ENCODE measurements at regions of chr12 and their contacts with region 1.

Region 1: DNA sequence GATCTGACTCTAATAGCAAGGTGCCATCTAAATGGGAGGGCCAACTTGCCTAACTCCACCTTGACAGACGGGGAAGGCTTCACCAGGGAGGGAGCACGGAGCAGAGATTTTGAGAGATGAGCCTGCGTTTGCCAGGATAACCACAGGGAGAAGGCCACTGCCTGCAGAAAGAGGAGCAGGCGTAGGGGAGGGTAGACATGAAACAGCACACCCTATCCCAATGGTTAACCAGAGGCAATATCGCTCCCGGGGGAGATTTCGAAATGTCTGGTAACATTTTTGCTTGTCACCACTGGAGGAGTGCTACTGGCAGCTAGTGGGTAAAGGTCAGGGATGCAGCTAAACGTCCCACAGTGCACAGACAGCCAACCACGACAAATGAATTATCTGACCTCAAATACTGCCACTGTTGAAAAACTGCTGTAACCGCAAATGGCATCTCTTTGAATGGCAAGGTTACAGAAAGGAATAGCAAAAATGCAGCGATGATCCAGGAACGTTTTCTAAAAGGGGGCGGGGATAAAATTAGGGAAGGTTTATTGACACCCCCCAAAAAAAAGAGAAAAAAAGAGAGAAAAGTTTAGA is 126.0 kb upstream of the ATF7IP start:
- DNase-seq: peak in 1 of 2 donors; percentile 32
- H3K4me3 ChIP-seq: peak overlapping the region; percentile 5 to 27
- H3K27ac ChIP-seq: peak overlapping the region in 1 of 2 donors; percentile 26
- H3K4me1 ChIP-seq: peaks cover 0 to 14% (median 4%) of the 10 kb centered on the region in 4 donors
- H3K27me3 ChIP-seq: no peaks in the 10 kb centered on the region
- CTCF ChIP-seq: no peak

Region 2: DNA sequence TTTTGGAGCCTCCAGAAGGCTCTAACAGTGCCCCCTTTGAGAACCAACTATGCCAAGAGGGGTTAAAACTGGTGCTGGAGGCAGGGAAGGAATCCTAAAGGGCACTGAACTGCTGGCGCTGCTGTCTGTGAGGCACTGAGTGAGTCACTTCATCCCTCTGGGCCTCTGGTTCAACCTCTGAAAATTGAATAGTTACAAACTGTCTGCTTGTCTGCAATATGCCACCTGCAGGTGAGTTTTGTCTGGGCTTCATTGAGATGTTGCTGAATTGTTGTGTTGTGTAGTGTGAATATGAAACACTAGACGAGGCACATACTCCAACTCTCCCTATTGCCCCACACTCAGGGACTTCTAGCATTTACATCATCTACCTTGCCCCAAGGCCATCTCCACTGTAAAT is 326.1 kb before region 1 on chr12:
- intact Hi-C with region 1: no loop called
- DNase-seq: no peak
- H3K4me3 ChIP-seq: no peak overlapping the region
- H3K27ac ChIP-seq: no peak overlapping the region
- H3K4me1 ChIP-seq: no peaks in the 10 kb centered on the region
- H3K27me3 ChIP-seq: no peaks in the 10 kb centered on the region
- CTCF ChIP-seq: no peak

Region 3: DNA sequence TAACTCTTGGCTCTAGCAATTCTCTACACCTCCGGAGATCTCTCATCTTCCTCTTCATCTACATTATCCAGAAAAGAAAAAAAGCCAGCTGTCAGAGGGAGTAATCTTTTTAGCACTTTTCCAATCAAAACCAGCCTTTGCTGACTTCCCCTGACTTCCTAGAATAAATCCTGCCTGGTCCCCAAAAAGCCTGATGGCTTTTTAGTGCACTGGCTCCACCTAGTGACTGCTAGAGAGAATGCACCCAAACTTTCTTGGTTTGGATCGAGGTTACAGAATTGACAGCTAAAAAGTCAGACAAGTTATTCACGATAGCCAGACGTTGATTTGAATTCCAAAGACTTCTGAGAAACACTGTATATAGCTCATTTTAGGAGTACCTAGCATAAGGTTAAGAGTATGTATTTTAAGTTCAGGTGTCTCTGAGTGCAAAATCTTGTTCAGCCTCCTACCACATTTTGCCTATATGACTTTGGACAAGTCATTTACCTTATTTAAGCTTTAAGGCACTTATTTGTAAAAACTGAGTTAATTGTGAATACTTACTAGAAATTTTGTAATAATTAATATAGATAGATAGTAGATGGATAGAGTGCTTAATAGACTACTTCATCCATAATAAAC is 72.3 kb before region 1 on chr12:
- intact Hi-C with region 1: no loop called
- DNase-seq: peak in 1 of 2 donors; percentile 29
- H3K4me3 ChIP-seq: no peak overlapping the region
- H3K27ac ChIP-seq: no peak overlapping the region
- H3K4me1 ChIP-seq: no peaks in the 10 kb centered on the region
- H3K27me3 ChIP-seq: no peaks in the 10 kb centered on the region
- CTCF ChIP-seq: peak; percentile 71 to 85

Region 4: GRCh38 chr12:14185427-14186192 is 53.8 kb before region 1 on chr12:
- intact Hi-C with region 1: no loop called
- DNase-seq: no peak
- H3K4me3 ChIP-seq: no peak overlapping the region
- H3K27ac ChIP-seq: no peak overlapping the region
- H3K4me1 ChIP-seq: no peaks in the 10 kb centered on the region
- H3K27me3 ChIP-seq: no peaks in the 10 kb centered on the region
- CTCF ChIP-seq: peak; percentile 15 to 34

Region 5: DNA sequence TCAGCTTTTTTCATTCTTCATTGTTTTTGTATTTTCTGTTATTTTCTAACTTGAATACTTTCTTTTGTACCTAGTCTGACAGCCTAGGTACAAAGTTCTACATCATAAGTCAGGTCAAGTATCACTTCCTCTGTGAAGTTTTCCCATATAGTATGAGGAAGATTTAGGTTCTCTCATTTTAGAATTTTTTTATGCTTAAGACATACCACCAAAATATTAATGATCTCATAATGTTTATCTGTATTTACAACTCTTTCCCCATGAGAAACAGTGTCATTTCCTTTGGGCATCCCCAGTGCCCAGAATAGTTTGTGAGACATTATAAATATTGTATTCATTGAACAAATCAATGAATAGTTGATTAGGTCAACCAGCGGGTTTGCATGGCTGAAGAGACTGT is 122.9 kb after region 1 on chr12:
- intact Hi-C with region 1: loop called (anchors 5 kb)
- DNase-seq: no peak
- H3K4me3 ChIP-seq: no peak overlapping the region
- H3K27ac ChIP-seq: no peak overlapping the region
- H3K4me1 ChIP-seq: peaks cover 0 to 10% (median 2%) of the 10 kb centered on the region in 4 donors
- H3K27me3 ChIP-seq: no peaks in the 10 kb centered on the region
- CTCF ChIP-seq: no peak

Region 6: DNA sequence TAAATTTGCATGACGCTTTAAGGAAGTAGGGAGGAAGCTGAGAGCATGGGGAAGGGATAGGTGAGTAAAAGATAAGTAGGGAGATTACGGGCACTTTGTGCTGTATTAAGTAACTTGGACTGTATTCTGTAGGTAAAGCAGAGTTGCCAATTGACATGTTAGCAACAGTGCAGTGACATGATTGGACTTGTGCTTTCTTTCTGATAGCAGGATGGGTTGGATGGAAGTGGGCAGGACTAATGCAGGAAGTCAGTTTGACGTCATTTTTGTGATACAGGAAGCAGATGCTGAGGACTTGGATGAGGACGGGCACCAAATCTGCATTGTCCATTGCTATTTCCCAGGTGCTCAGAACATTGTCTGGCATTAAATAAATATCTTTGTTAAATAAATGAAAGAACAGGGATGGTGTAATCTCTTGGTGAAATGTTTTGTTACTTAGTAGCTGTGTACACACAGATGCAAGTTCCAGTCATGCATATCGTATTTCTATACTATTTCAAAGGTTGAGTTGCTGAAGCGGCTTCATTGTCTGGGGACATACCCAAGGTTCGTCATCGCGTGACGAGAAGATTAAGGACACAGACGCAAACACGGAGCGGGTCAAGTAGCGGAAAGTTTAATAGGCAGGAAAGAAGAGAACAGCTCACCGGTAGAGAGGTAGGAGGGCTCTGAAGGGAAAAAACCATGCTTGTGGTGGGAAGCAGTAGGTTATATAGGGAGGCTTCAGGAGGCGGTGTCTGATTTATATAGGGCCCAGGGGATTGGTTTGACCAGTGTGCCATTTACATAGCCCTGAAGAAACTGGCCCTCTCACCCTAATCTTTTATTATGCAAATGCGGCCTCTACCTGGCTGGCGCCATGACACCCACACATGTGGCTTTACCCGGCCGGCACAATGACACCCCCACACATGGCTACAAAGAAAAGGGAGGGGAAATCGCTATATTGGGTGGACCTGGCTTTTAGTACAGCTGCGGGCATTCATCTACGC is 426.2 kb after region 1 on chr12:
- intact Hi-C with region 1: loop called (anchors 5 kb)
- DNase-seq: no peak
- H3K4me3 ChIP-seq: no peak overlapping the region
- H3K27ac ChIP-seq: no peak overlapping the region
- H3K4me1 ChIP-seq: no peaks in the 10 kb centered on the region
- H3K27me3 ChIP-seq: no peaks in the 10 kb centered on the region
- CTCF ChIP-seq: no peak

Measured in tibial artery (tissue), 4 donors.